Activated CD4-positive, alpha-beta memory T cell treated with anti-CD3 and anti-CD28 coated beads for 36 hours (primary cell): ENCODE measurements at regions of chr3 and their contacts with region 1.

Region 1: GRCh38 chr3:171459942-171460724 is at the start of gene TNIK:
- DNase-seq: peak; percentile 96
- H3K4me3 Mint-ChIP-seq: peak within 1 kb of the TSS; percentile 89
- H3K27ac Mint-ChIP-seq: peak within 1 kb of the TSS; percentile 89
- H3K4me1 Mint-ChIP-seq: peaks cover 38% of the 10 kb centered on the region
- H3K27me3 Mint-ChIP-seq: no peaks in the 10 kb centered on the region
- total RNA-seq, gene TNIK: 22.4 to 27.1 TPM

Region 2: DNA sequence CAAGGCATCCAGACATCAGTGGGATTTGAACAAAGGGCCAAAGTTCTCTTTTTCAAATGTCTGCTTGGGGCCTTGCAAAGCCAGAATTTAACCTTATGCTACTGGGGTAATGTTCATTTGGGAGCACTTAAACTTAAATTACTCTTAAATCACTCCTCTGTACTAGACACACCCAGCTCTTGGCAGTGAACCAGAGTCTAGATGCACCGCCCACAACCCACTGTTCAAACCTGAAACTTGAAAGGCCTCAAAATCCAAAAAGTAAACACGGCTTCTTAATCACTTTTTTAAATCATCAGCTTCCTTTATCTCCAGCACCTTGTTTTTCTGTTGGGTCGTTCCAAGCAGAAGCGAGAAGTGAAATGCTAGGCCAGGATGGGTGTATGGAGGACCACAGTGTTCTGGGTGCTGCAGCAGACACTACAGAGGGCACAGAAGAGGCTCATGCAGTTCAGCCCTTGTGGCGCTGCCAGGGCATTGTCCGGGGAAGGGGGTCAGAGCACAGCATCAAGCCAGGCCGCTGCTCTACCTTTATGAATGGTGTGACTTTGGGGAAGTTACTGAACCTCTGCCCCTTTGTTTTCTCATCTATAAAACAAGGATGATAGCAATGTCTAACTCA is 1825.4 kb before region 1 on chr3:
- CTCF ChIA-PET with region 1: no interaction called
- POLR2A ChIA-PET with region 1: no interaction called
- intact Hi-C with region 1: no loop called
- DNase-seq: no peak
- H3K4me3 Mint-ChIP-seq: no peak overlapping the region
- H3K27ac Mint-ChIP-seq: no peak overlapping the region
- H3K4me1 Mint-ChIP-seq: peaks cover 6% of the 10 kb centered on the region
- H3K27me3 Mint-ChIP-seq: peaks cover 14% of the 10 kb centered on the region

Region 3: DNA sequence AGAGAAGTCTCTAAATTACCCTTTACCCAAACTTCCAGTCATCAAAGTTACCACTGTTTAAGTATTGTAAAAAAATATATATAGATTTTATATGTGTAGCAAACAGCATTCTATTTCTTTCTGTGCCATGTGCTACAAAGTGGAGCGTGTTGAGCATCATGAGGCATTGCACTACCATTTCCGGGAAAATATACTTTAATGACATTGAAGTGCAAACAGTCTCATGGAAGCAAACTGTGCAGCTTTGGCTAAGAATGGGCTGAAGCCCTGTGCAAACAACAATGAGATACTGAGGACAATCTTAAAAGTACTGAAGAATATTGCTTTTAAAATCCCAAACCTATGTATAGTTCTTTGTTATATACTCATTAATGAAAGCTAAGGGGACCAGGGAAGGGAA is 583.6 kb before region 1 on chr3:
- CTCF ChIA-PET with region 1: no interaction called
- POLR2A ChIA-PET with region 1: no interaction called
- intact Hi-C with region 1: no loop called
- DNase-seq: no peak
- H3K4me3 Mint-ChIP-seq: no peak overlapping the region
- H3K27ac Mint-ChIP-seq: no peak overlapping the region
- H3K4me1 Mint-ChIP-seq: no peaks in the 10 kb centered on the region
- H3K27me3 Mint-ChIP-seq: no peaks in the 10 kb centered on the region

Region 4: DNA sequence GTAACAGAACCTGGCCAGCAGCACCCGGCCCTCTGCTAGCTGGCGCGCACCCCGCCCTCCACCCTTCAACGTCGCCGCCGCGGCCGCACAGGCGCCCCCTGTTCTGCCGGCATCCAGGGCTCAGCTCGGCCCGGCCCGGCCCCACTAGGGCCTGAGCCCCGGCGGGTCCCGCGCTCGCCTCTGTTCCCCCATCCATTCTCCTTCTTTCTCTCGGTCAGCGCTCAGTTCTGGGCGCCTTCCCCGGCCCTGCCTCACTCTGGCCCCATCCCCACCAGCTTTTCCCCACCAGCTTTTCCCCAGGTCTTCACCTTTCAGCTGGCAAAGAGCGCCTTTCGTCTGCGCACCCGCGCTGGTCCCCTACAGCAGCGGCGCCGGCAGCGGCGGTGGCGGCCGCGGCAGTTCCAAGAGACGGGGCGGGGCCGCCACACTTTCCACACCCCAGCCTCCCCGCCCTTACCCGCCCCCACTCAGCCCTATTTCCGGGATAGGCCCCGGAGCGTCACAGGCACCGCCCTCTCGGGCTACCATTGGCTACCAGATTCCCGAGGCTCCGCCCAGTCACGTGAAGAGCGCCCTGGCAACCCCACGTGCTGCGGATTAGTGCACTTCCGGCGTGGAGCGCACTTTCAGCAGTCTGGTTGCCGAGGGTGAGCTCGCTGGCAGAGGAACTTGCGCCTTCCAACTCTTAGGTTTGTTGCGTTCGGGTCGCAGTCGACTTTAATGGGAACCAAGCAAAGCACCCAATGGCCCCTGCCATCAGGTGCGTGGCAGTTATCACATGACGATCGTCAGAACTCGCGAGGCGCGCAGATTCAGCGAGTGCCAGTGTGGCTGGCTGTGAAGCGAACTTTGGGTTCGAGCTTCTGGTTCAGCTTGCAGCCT is 551.7 kb before region 1 on chr3 and contains the start of gene EIF5A2:
- CTCF ChIA-PET with region 1: no interaction called
- POLR2A ChIA-PET with region 1: no interaction called
- intact Hi-C with region 1: loop called (anchors 10 kb)
- DNase-seq: peak; percentile 97
- H3K4me3 Mint-ChIP-seq: peak within 1 kb of the TSS; percentile 93
- H3K27ac Mint-ChIP-seq: peak within 1 kb of the TSS; percentile 69
- H3K4me1 Mint-ChIP-seq: peaks cover 20% of the 10 kb centered on the region
- H3K27me3 Mint-ChIP-seq: no peaks in the 10 kb centered on the region
- total RNA-seq, gene EIF5A2: 5.7 to 8.7 TPM

Region 5: GRCh38 chr3:171187706-171188290 is 272.3 kb before region 1 on chr3:
- CTCF ChIA-PET with region 1: interaction called, 7 read pairs
- POLR2A ChIA-PET with region 1: interaction called, 3 read pairs
- intact Hi-C with region 1: loop called (anchors 1 kb)
- DNase-seq: no peak
- H3K4me3 Mint-ChIP-seq: no peak overlapping the region
- H3K27ac Mint-ChIP-seq: no peak overlapping the region
- H3K4me1 Mint-ChIP-seq: peaks cover 53% of the 10 kb centered on the region
- H3K27me3 Mint-ChIP-seq: no peaks in the 10 kb centered on the region

Region 6: GRCh38 chr3:171248425-171249111 is 211.6 kb before region 1 on chr3:
- CTCF ChIA-PET with region 1: interaction called, 4 read pairs
- POLR2A ChIA-PET with region 1: interaction called, 3 read pairs
- intact Hi-C with region 1: loop called (anchors 2 kb)
- DNase-seq: no peak
- H3K4me3 Mint-ChIP-seq: no peak overlapping the region
- H3K27ac Mint-ChIP-seq: no peak overlapping the region
- H3K4me1 Mint-ChIP-seq: peaks cover 47% of the 10 kb centered on the region
- H3K27me3 Mint-ChIP-seq: no peaks in the 10 kb centered on the region

Region 7: GRCh38 chr3:171328419-171329082 is 131.6 kb before region 1 on chr3:
- CTCF ChIA-PET with region 1: interaction called, 3 read pairs
- POLR2A ChIA-PET with region 1: interaction called, 3 read pairs
- intact Hi-C with region 1: loop called (anchors 2 kb)
- DNase-seq: peak; percentile 62
- H3K4me3 Mint-ChIP-seq: no peak overlapping the region
- H3K27ac Mint-ChIP-seq: no peak overlapping the region
- H3K4me1 Mint-ChIP-seq: peaks cover 46% of the 10 kb centered on the region
- H3K27me3 Mint-ChIP-seq: no peaks in the 10 kb centered on the region

Region 8: GRCh38 chr3:171480526-171480925 is 20.4 kb after region 1 on chr3:
- CTCF ChIA-PET with region 1: no interaction called
- POLR2A ChIA-PET with region 1: interaction called, 3 read pairs
- intact Hi-C with region 1: loop called (anchors 1 kb)
- DNase-seq: no peak
- H3K4me3 Mint-ChIP-seq: peak overlapping the region; percentile 1
- H3K27ac Mint-ChIP-seq: peak overlapping the region; percentile 63
- H3K4me1 Mint-ChIP-seq: peaks cover 15% of the 10 kb centered on the region
- H3K27me3 Mint-ChIP-seq: no peaks in the 10 kb centered on the region

Region 9: DNA sequence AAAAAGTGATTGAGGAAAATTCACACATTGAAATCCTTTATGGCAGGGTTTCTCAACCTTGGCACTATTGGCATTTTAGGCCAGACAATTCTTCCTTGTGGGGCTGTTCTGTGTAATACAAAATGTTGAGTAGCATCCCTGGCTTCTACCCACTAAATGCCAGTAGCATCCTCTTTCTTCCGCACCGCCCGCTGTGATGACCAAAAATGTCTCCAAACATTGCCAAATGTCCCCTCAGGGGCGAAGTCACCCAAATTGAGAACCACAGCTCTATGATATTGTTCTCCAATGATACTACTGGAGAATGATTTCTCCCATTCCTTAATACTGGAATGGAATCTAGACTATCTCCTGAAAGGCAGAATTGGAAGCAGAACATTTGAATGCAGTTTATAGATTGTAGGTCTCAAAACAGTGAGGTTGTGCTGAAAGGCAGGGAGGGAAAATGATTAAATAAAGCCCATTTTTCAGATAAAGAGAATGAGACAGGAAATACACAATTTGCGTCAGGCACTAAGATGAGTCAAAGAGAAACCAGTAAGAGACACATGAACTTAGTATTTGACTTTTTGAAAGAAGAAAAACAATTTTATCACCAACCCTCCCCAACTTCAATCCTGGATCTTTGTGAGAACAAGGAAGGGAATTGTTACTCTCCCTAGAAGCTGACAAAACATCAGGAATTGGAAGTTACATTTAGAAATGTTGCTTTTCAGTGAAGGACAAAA is 101.6 kb after region 1 on chr3:
- CTCF ChIA-PET with region 1: interaction called, 3 read pairs
- POLR2A ChIA-PET with region 1: no interaction called
- intact Hi-C with region 1: loop called (anchors 1 kb)
- DNase-seq: no peak
- H3K4me3 Mint-ChIP-seq: peak overlapping the region; percentile 36
- H3K27ac Mint-ChIP-seq: peak overlapping the region; percentile 93
- H3K4me1 Mint-ChIP-seq: peaks cover 26% of the 10 kb centered on the region
- H3K27me3 Mint-ChIP-seq: no peaks in the 10 kb centered on the region

Region 10: GRCh38 chr3:171809821-171810628 is 349.9 kb after region 1 on chr3 and contains the start of gene PLD1:
- CTCF ChIA-PET with region 1: no interaction called
- POLR2A ChIA-PET with region 1: no interaction called
- intact Hi-C with region 1: no loop called
- DNase-seq: peak; percentile 68
- H3K4me3 Mint-ChIP-seq: peak within 1 kb of the TSS; percentile 72
- H3K27ac Mint-ChIP-seq: no peak within 1 kb of the TSS
- H3K4me1 Mint-ChIP-seq: peaks cover 18% of the 10 kb centered on the region
- H3K27me3 Mint-ChIP-seq: peaks cover 39% of the 10 kb centered on the region
- total RNA-seq, gene PLD1: 0.99 to 1.4 TPM